PC-9 (cell line): ENCODE measurements at regions of chr20 and their contacts with region 1.

Region 1: DNA sequence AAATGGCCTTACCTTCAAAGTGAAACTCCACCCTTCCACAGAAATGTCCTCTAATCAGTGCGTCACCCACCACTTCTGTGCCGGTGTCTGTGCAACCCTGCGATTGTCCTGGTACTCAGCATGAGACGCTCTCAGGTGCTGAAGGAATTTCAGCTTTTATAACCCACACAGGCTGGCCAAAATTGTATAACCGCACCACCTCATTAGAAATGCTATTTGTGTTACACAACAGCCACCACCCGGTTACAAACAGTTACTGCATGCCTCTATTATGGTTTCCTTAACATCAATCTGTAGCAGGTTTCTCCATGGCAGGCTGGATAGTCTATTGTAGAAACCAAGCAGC is 51.5 kb downstream of the SLC23A2 start:
- DNase-seq: no peak
- H3K4me3 ChIP-seq: no peak overlapping the region
- H3K27ac ChIP-seq: no peak overlapping the region
- H3K4me1 ChIP-seq: peaks cover 16% of the 10 kb centered on the region
- H3K27me3 ChIP-seq: no peaks in the 10 kb centered on the region
- CTCF ChIP-seq: peak; percentile 32; the same call in 1 of the 2 replicates

Region 2: GRCh38 chr20:4869290-4870193 is 80.3 kb before region 1 on chr20:
- CTCF ChIA-PET with region 1: no interaction called
- POLR2A ChIA-PET with region 1: no interaction called
- intact Hi-C with region 1: loop called (anchors 2 kb)
- DNase-seq: peak; percentile 49 to 81
- H3K4me3 ChIP-seq: no peak overlapping the region
- H3K27ac ChIP-seq: peak overlapping the region; percentile 51
- H3K4me1 ChIP-seq: peaks cover 21% of the 10 kb centered on the region
- H3K27me3 ChIP-seq: no peaks in the 10 kb centered on the region
- CTCF ChIP-seq: no peak

Region 3: DNA sequence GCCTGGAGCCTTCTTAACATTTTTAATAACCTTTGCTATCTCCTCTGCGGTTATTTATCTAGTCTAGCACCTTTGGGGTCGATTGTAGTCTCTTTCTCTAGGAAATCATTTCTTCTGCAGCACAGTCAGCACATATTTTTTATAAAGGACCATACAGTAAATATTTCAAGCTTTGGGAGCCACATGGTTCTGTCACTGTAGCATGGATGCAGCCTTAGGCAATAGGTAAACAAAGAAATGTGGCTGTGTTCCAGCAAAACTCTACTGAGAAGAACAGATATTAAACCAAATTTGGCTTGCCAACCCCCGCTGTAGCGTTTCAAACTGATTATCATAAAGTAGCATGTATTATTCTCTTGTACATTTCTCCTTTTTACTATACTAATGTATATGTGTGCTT is 44.2 kb before region 1 on chr20:
- CTCF ChIA-PET with region 1: interaction called, 6 read pairs
- POLR2A ChIA-PET with region 1: interaction called, 13 read pairs
- intact Hi-C with region 1: no loop called
- DNase-seq: no peak
- H3K4me3 ChIP-seq: no peak overlapping the region
- H3K27ac ChIP-seq: no peak overlapping the region
- H3K4me1 ChIP-seq: peaks cover 27% of the 10 kb centered on the region
- H3K27me3 ChIP-seq: no peaks in the 10 kb centered on the region
- CTCF ChIP-seq: no peak

Region 4: DNA sequence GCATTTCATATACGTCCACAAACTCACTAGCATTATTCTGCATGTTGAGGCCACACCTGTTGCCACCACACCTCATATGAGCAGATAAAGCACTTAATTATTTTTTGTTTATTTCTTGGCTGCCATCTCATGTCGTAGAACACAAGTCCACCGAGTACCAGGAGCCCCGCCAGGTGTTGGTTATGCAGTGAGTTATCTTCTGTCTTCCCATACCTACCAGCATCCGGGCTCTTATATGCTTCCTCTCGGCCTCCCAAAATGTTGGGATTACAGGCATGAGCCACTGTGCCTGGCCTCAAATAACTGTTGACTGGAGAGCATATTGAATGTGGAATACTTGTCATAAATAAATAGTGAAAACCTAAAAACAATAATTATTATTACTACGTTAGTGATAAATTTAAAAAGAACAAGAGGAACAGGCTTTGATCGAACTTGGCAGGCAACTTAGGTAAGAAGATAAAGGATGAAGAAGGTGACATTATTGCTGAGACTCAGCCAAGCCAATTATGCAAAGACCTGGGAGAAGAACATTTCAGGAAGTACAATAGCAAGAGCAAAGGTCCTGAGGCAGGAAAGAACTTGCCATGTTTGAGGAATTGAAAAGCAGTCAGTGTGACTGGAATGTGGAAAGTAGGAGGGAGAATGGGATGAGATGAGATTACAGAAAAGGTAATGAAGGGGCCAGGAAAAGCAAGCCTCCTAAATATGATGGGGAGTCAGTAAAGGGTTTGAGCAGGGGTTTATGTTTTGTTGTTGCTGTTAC is 64.1 kb after region 1 on chr20:
- CTCF ChIA-PET with region 1: no interaction called
- POLR2A ChIA-PET with region 1: no interaction called
- intact Hi-C with region 1: no loop called
- DNase-seq: no peak
- H3K4me3 ChIP-seq: no peak overlapping the region
- H3K27ac ChIP-seq: no peak overlapping the region
- H3K4me1 ChIP-seq: peaks cover 8% of the 10 kb centered on the region
- H3K27me3 ChIP-seq: no peaks in the 10 kb centered on the region
- CTCF ChIP-seq: no peak